ENCODE measurements at regions of chr19 and their contacts with region 1.

Region 1: GRCh38 chr19:45195764-45196163 is 17.2 kb downstream of the BLOC1S3 start:
- DNase-seq: no peak
- H3K4me3 ChIP-seq: no peak overlapping the region
- CTCF ChIP-seq: no peak
- POLR2A ChIP-seq: no peak

Region 2: GRCh38 chr19:45245334-45245787 is 49.6 kb after region 1 on chr19 and contains the start of gene EXOC3L2:
- intact Hi-C with region 1: loop called (anchors 10 kb)
- DNase-seq: no peak
- H3K4me3 ChIP-seq: no peak within 1 kb of the TSS
- CTCF ChIP-seq: no peak
- POLR2A ChIP-seq: no peak
- total RNA-seq, gene EXOC3L2: 1.2 to 4.5 (median 1.6) TPM